ENCODE measurements at regions of chr2 and their contacts with region 1.

Region 1: GRCh38 chr2:226791487-226792081 is 8.0 kb downstream of the IRS1 start:
- DNase-seq: peak; percentile 94
- H3K4me3 Mint-ChIP-seq: peak overlapping the region; percentile 80
- H3K27ac Mint-ChIP-seq: peak overlapping the region; percentile 92
- H3K4me1 Mint-ChIP-seq: peaks cover 29% of the 10 kb centered on the region
- H3K27me3 Mint-ChIP-seq: no peaks in the 10 kb centered on the region

Region 2: DNA sequence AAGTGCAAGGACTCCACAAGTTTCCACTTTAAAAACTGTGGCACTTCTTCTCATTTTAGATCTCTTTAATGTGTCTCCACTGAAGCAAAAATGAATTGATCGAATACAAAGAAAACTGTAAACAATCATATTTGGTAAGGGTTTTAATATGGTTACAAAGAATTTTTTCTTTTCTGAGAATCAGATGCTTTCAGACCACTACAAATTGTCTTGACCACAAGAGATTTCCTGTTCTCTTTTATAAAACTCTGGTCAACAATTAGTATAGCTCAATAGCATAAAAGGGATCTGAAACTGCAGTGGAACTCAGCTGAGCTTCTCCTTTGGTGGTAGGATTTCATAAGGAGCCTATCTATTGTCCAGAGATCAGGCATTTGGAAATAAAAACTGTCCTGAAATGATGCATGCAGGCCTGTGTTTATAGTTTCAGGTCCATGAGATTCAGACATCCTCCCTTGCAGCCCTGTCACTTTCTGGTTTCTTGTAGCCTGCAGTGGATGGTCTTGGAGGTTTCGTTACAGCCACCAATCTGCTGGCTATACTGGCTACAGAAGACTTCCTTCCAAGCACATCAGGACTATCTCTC is 1869.3 kb before region 1 on chr2:
- CTCF ChIA-PET with region 1: no interaction called
- POLR2A ChIA-PET with region 1: no interaction called
- intact Hi-C with region 1: loop called (anchors 10 kb)
- DNase-seq: no peak
- H3K4me3 Mint-ChIP-seq: no peak overlapping the region
- H3K27ac Mint-ChIP-seq: peak overlapping the region; percentile 81
- H3K4me1 Mint-ChIP-seq: peaks cover 56% of the 10 kb centered on the region
- H3K27me3 Mint-ChIP-seq: no peaks in the 10 kb centered on the region

Region 3: GRCh38 chr2:226649871-226650660 is 141.5 kb before region 1 on chr2:
- CTCF ChIA-PET with region 1: no interaction called
- POLR2A ChIA-PET with region 1: no interaction called
- intact Hi-C with region 1: loop called (anchors 2 kb)
- DNase-seq: peak; percentile 66
- H3K4me3 Mint-ChIP-seq: no peak overlapping the region
- H3K27ac Mint-ChIP-seq: peak overlapping the region; percentile 39
- H3K4me1 Mint-ChIP-seq: peaks cover 29% of the 10 kb centered on the region
- H3K27me3 Mint-ChIP-seq: no peaks in the 10 kb centered on the region

Region 4: GRCh38 chr2:226738821-226739544 is 52.6 kb before region 1 on chr2:
- CTCF ChIA-PET with region 1: no interaction called
- POLR2A ChIA-PET with region 1: no interaction called
- intact Hi-C with region 1: loop called (anchors 5 kb)
- DNase-seq: no peak
- H3K4me3 Mint-ChIP-seq: no peak overlapping the region
- H3K27ac Mint-ChIP-seq: no peak overlapping the region
- H3K4me1 Mint-ChIP-seq: peaks cover 3% of the 10 kb centered on the region
- H3K27me3 Mint-ChIP-seq: no peaks in the 10 kb centered on the region

Region 5: DNA sequence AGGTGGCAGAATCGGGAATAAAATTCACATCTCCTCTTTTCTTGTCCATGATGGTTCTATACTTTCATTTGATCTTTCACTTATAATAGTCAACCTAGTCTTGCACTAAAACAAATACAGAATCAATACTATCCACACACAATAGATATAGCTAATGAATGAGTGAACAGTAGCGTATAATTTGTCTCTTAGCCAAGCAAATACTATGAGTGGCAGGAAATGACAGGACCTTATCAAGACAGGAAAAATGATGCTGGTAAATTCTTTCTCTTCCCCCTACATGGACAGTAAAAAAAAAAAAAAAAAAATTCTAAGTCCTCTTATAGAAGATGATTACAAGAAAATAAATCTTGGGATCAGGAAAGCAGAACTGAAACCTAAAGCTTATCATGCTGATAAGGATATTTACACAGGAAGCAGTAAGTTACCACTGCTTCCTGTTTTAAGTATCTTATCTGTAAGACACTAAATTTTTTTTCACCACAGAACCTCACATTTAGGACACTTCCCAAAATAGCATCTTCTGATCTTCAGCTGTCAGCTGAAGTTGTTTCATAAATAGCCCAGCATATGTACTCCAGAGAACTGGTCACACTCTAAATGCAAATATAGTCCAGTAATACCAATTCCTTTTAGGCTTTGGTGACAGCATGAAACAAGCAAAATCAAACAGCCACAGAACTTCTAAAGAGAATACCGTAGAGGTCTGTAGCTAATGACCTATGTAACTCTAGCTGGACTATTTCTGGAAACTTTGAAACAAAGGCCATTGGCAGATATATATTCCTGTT is 19.0 kb before region 1 on chr2:
- CTCF ChIA-PET with region 1: no interaction called
- POLR2A ChIA-PET with region 1: no interaction called
- intact Hi-C with region 1: loop called (anchors 2 kb)
- DNase-seq: no peak
- H3K4me3 Mint-ChIP-seq: no peak overlapping the region
- H3K27ac Mint-ChIP-seq: no peak overlapping the region
- H3K4me1 Mint-ChIP-seq: peaks cover 16% of the 10 kb centered on the region
- H3K27me3 Mint-ChIP-seq: no peaks in the 10 kb centered on the region